Calu3 (cell line): ENCODE measurements at regions of chr1 and their contacts with region 1.

Region 1: GRCh38 chr1:8121261-8122170 is 95.4 kb upstream of the ERRFI1 start:
- DNase-seq: peak; percentile 78
- H3K4me3 Mint-ChIP-seq: peak overlapping the region; percentile 28
- H3K27ac Mint-ChIP-seq: peak overlapping the region; percentile 98
- H3K4me1 Mint-ChIP-seq: peaks cover 47% of the 10 kb centered on the region
- H3K27me3 Mint-ChIP-seq: no peaks in the 10 kb centered on the region
- CTCF ChIP-seq: no peak

Region 2: DNA sequence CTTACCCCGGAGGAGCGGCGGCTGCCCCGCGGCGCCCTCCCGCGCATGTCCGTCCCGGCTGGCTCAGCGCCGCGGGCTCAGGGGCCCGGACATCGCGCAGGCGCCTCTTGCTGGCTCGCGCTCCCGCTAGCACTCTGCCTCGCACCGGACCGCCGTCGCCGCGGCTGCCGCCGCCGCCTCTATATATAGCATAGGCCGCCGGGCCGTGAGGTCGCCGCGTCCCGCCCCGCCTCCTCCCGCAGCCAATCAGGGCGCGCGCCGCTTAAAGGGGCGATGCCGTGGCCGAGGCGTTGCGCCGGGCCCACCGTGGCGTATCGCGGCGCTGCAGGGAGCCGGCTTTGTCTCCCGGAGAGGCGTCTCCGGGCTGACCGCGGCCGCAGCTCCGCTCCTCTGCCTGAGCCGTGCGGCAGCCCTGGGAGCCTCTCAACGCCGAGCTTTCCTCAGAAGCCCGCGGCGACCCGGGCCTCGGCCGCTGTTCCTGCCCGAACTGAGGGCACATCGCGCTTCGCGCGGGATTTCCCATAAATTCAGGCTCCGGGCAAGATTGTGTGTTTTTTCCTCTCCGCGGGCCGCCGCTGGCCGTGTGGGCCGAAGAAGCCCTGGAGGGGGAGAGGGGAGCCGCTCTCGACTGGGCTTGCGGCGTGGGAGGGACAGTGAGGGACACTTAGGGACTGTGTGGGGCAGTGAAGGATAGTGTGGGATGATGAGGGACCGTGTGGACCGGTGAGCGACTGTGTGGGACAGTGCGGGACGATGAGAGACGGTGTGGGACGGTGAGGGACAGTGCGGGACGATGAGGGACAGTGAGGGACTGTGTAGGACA is 95.2 kb before region 1 on chr1 and contains the start of gene ERRFI1:
- CTCF ChIA-PET with region 1: no interaction called
- intact Hi-C with region 1: loop called (anchors 1 kb)
- DNase-seq: peak; percentile 94
- H3K4me3 Mint-ChIP-seq: peak within 1 kb of the TSS; percentile 97
- H3K27ac Mint-ChIP-seq: peak within 1 kb of the TSS; percentile 100
- H3K4me1 Mint-ChIP-seq: peaks cover 25% of the 10 kb centered on the region
- H3K27me3 Mint-ChIP-seq: no peaks in the 10 kb centered on the region
- CTCF ChIP-seq: no peak
- total RNA-seq, gene ERRFI1: 74.9 and 83.0 TPM in 2 replicates

Region 3: DNA sequence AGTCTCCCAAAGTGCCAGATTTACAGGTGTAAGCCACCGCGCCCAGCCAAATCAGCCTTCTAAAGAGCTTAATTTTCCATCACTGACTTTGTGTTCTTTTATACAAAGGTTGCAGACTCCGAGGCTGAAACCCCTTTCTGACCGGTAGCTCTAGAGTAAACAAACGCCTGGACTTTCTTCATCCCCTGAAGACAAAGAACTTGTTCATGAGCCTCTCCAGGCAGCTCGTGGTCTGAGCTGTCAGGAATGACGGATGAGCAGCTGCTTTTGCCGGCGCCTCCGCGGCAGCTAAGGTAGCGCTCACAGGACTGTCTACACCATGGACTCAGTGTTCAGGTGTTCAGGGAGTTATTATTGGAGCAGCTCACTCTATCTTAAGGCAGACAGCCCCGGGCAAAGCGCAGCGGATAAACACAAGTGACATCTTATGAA is 33.1 kb after region 1 on chr1:
- CTCF ChIA-PET with region 1: interaction called, 6 read pairs
- intact Hi-C with region 1: loop called (anchors 1 kb)
- DNase-seq: peak; percentile 77
- H3K4me3 Mint-ChIP-seq: peak overlapping the region; percentile 60
- H3K27ac Mint-ChIP-seq: peak overlapping the region; percentile 95
- H3K4me1 Mint-ChIP-seq: peaks cover 20% of the 10 kb centered on the region
- H3K27me3 Mint-ChIP-seq: no peaks in the 10 kb centered on the region
- CTCF ChIP-seq: no peak

Region 4: DNA sequence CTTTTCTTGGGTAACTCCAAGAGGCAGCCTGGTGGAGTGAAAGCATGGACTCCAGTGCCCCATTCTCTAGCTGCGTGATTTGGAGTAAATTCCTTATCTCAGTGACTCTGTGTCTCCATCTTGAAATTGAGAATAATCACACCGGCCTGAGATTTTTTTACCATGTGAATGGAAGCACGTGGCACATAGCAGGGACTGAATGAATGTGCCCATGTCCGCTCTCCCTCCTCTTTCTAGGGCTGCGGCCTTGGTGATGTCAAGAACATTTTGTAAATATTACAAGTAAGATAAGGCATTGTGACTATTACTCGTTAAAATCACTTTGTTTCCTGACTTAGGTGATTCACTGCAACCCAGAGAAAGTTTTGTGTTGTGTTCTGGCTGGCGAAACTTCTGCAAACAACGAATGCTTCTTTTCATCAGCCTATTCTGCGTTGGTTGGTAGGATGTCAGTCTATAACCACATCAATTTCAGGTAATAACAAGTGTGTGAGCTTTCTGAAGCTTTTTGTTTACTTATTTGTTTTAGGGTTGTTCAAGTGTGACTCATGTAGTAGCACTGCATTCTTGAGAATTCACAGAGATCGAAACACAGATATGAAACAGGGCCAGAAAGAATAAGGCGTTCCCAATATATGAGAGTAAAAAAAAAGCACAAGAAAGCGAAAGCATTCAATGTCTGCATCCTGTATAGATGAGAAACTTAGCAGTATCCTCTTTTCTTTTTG is 60.7 kb after region 1 on chr1:
- CTCF ChIA-PET with region 1: interaction called, 4 read pairs
- intact Hi-C with region 1: loop called (anchors 1 kb)
- DNase-seq: peak; percentile 68
- H3K4me3 Mint-ChIP-seq: peak overlapping the region; percentile 44
- H3K27ac Mint-ChIP-seq: peak overlapping the region; percentile 91
- H3K4me1 Mint-ChIP-seq: no peaks in the 10 kb centered on the region
- H3K27me3 Mint-ChIP-seq: no peaks in the 10 kb centered on the region
- CTCF ChIP-seq: no peak